GM12878 (cell line): ENCODE measurements at regions of chr1 and their contacts with region 1.

Region 1: DNA sequence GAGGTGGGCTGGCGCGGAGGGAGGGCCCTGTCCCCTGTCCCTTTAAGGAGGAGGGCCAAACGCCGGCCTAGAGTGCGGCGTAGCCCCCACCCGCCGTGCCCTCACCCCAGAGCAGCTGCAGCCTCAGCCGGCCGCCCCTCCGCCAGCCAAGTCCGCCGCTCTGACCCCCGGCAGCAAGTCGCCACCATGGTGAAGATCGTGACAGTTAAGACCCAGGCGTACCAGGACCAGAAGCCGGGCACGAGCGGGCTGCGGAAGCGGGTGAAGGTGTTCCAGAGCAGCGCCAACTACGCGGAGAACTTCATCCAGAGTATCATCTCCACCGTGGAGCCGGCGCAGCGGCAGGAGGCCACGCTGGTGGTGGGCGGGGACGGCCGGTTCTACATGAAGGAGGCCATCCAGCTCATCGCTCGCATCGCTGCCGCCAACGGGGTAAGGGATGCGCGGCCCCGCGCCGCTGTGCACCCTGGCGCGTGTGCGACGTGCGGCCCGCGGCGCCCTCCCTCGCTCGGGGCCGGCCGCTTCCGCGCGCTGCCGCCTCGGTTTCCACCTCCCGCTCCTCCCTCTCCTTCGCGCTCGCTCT is at the start of gene PGM1:
- DNase-seq: peak; percentile 27
- ATAC-seq: peak; percentile 88
- H3K4me3 ChIP-seq: peak within 1 kb of the TSS; percentile 86
- H3K27ac ChIP-seq: peak within 1 kb of the TSS; percentile 78
- H3K4me1 ChIP-seq: no peaks in the 10 kb centered on the region
- H3K27me3 ChIP-seq: no peaks in the 10 kb centered on the region
- CTCF ChIP-seq: 0 out of 6 replicates have a peak, but pooled peaks of 1 of the 3 experiments have one; percentile 5
- EP300 ChIP-seq: no peak
- POLR2A ChIP-seq: peak; percentile 88
- RAD21 ChIP-seq: no peak
- polyA plus RNA-seq, gene PGM1: 22.5 to 29.6 TPM

Region 2: DNA sequence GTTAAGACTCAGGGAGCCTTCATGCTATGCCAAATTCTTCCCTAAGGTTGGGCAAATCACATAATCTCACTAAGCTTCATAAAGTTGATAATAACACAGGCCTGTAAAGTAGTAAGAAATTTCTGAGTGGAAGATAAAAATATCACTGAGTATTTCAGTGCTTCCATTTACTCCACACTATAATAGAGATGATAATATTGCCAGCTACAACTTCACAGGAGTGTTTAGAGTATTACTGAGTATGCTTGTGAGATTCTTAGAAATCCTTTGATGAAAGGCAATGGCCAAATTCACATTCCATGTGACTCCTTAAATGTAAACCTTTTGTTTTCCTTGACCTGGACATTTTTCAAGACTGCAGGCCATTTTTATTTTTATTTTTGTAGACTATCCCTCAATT is 80.8 kb before region 1 on chr1:
- CTCF ChIA-PET with region 1: no interaction called
- POLR2A ChIA-PET with region 1: no interaction called
- RAD21 ChIA-PET with region 1: no interaction called
- SMC1A ChIA-PET with region 1: no interaction called
- in situ Hi-C with region 1: no loop called
- intact Hi-C with region 1: no loop called
- DNase-seq: no peak
- ATAC-seq: no peak
- H3K4me3 ChIP-seq: no peak overlapping the region
- H3K27ac ChIP-seq: no peak overlapping the region
- H3K4me1 ChIP-seq: no peaks in the 10 kb centered on the region
- H3K27me3 ChIP-seq: no peaks in the 10 kb centered on the region
- CTCF ChIP-seq: no peak
- EP300 ChIP-seq: no peak
- POLR2A ChIP-seq: no peak
- RAD21 ChIP-seq: no peak

Region 3: DNA sequence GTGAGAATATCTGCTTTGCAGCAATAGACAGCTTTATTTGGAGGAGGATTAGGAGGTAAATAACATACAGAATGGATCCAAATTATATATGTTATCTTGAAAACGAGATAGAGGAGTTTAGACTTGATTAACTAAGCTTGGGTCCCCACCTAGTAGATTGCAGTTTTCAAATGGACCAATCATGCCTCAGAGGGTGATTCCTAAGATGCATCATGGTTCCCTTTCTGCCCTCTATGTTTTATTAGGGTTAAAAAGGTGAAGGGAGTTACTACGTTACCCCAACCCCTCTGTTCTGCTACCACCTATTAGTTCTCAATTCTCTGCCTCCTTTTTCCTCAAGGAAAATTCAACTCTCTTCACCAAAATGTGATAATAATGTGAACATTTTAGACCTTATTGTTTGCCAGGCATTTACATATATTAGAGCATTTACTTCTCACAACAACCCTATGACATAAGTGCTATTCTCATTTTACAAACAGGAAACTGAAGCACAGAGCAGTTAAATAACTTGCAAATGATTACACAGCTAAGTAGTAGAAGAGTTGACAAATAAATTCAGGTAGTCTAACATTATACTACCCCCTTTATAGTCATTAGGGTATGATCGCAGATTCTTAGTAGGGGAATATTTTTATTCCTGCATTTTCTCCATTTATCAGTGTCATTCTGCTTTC is 23.6 kb before region 1 on chr1:
- CTCF ChIA-PET with region 1: interaction called, 6 read pairs
- POLR2A ChIA-PET with region 1: interaction called, 11 read pairs
- RAD21 ChIA-PET with region 1: interaction called, 5 read pairs
- SMC1A ChIA-PET with region 1: interaction called, 10 read pairs
- in situ Hi-C with region 1: no loop called
- intact Hi-C with region 1: no loop called
- DNase-seq: no peak
- ATAC-seq: peak; percentile 89
- H3K4me3 ChIP-seq: no peak overlapping the region
- H3K27ac ChIP-seq: no peak overlapping the region
- H3K4me1 ChIP-seq: no peaks in the 10 kb centered on the region
- H3K27me3 ChIP-seq: no peaks in the 10 kb centered on the region
- CTCF ChIP-seq: no peak
- EP300 ChIP-seq: no peak
- POLR2A ChIP-seq: no peak
- RAD21 ChIP-seq: no peak

Region 4: GRCh38 chr1:63575340-63575826 is 18.0 kb before region 1 on chr1:
- CTCF ChIA-PET with region 1: interaction called, 29 read pairs
- POLR2A ChIA-PET with region 1: interaction called, 11 read pairs
- RAD21 ChIA-PET with region 1: interaction called, 11 read pairs
- SMC1A ChIA-PET with region 1: interaction called, 10 read pairs
- in situ Hi-C with region 1: no loop called
- intact Hi-C with region 1: no loop called
- DNase-seq: no peak
- ATAC-seq: peak; percentile 51
- H3K4me3 ChIP-seq: no peak overlapping the region
- H3K27ac ChIP-seq: no peak overlapping the region
- H3K4me1 ChIP-seq: no peaks in the 10 kb centered on the region
- H3K27me3 ChIP-seq: no peaks in the 10 kb centered on the region
- CTCF ChIP-seq: peak; percentile 43 to 59 (median 50); a peak in 4 of 6 replicates
- EP300 ChIP-seq: no peak
- POLR2A ChIP-seq: no peak
- RAD21 ChIP-seq: peak; percentile 9; the same call in 1 of the 2 replicates